ENCODE measurements at regions of chr19 and their contacts with region 1.

Region 1: GRCh38 chr19:15154002-15154612 is 46.7 kb downstream of the NOTCH3 start:
- DNase-seq: no peak
- ATAC-seq: peak; percentile 73
- H3K4me3 ChIP-seq: no peak overlapping the region
- H3K27ac ChIP-seq: no peak overlapping the region
- H3K4me1 ChIP-seq: no peaks in the 10 kb centered on the region
- H3K27me3 ChIP-seq: no peaks in the 10 kb centered on the region
- CTCF ChIP-seq: peak; percentile 75

Region 2: GRCh38 chr19:14786421-14786851 is 367.7 kb before region 1 on chr19:
- CTCF ChIA-PET with region 1: no interaction called
- POLR2A ChIA-PET with region 1: no interaction called
- in situ Hi-C with region 1: no loop called
- intact Hi-C with region 1: no loop called
- DNase-seq: no peak
- ATAC-seq: peak; percentile 79
- H3K4me3 ChIP-seq: 0 out of 4 replicates have a peak overlapping the region, but pooled peaks have one; percentile 4 to 6
- H3K27ac ChIP-seq: no peak overlapping the region
- H3K4me1 ChIP-seq: no peaks in the 10 kb centered on the region
- H3K27me3 ChIP-seq: no peaks in the 10 kb centered on the region
- CTCF ChIP-seq: peak; percentile 94

Region 3: DNA sequence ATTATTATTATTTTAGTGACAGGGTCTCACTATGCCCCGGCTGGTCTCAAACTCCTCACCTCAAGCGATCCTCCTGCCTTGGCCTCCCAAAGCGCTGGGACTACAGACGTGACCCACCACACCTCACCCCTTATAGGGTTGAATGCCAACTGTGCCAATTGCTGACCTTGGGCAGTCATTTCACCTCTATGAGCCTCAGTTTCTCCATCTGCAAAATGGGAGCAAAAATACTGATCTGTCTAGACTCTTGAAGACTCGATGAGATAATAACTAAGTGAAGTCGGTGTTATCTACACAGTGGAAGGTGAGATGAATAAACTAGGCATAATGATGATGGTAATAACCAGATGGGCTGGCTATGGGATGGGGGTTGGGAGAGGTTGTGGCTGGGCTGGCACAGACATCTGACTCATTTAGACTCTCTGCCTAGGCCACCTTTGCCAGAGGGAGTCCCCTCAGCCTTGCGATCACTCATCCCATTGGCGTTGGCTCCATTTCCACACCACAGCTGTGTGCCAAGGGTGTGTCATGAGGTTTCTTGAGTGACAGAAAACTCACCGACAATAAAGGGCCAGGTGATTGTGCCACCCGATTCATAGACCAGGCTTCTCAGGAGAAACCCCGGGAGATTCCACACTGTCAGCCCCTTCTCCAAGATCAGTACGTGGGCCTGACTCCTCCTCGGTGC is 105.1 kb before region 1 on chr19 and contains the start of gene CASP14:
- CTCF ChIA-PET with region 1: no interaction called
- POLR2A ChIA-PET with region 1: no interaction called
- in situ Hi-C with region 1: no loop called
- intact Hi-C with region 1: no loop called
- DNase-seq: no peak
- ATAC-seq: no peak
- H3K4me3 ChIP-seq: no peak within 1 kb of the TSS
- H3K27ac ChIP-seq: no peak within 1 kb of the TSS
- H3K4me1 ChIP-seq: no peaks in the 10 kb centered on the region
- H3K27me3 ChIP-seq: no peaks in the 10 kb centered on the region
- CTCF ChIP-seq: no peak
- total RNA-seq, gene CASP14: not detected

Region 4: GRCh38 chr19:15101479-15102082 is 52.5 kb before region 1 on chr19:
- CTCF ChIA-PET with region 1: interaction called, 3 read pairs
- POLR2A ChIA-PET with region 1: interaction called, 21 read pairs
- in situ Hi-C with region 1: no loop called
- intact Hi-C with region 1: no loop called
- DNase-seq: peak; percentile 30
- ATAC-seq: peak; percentile 69
- H3K4me3 ChIP-seq: no peak overlapping the region
- H3K27ac ChIP-seq: no peak overlapping the region
- H3K4me1 ChIP-seq: peaks cover 4% of the 10 kb centered on the region; the same call in 1 of the 2 replicates
- H3K27me3 ChIP-seq: no peaks in the 10 kb centered on the region
- CTCF ChIP-seq: peak; percentile 78

Region 5: DNA sequence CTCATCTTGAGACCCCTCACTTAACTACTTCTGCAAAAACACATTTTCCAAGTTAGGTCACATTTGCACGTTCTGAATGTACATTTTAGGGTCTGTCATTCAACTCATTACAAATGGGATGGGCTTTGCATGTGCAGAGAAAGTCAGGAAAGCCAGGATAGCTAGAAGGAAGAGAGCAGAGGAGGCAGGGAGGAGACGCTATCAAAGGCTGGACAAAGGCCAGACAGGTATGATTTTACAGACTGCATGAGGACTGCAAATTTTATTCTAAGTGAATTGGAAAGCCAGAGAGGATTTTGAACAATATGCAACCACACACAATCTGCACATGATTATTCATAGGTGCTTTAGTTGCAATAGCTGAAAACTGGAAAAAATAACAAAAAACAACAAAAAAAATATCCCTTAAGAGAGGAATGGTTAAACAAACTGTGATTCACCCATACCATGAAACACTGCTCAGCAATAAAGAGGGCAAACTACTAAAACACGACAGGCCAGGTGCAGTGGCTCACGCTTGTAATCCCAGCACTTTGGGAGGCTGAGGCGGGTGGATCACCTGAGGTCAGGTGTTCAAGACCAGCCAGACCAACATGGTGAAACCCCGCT is 25.8 kb before region 1 on chr19:
- CTCF ChIA-PET with region 1: no interaction called
- POLR2A ChIA-PET with region 1: interaction called, 10 read pairs
- in situ Hi-C with region 1: no loop called
- intact Hi-C with region 1: no loop called
- DNase-seq: no peak
- ATAC-seq: no peak
- H3K4me3 ChIP-seq: no peak overlapping the region
- H3K27ac ChIP-seq: no peak overlapping the region
- H3K4me1 ChIP-seq: peaks cover 11% of the 10 kb centered on the region
- H3K27me3 ChIP-seq: no peaks in the 10 kb centered on the region
- CTCF ChIP-seq: no peak

Region 6: GRCh38 chr19:15136246-15136954 is 17.7 kb before region 1 on chr19:
- CTCF ChIA-PET with region 1: interaction called, 11 read pairs
- POLR2A ChIA-PET with region 1: no interaction called
- in situ Hi-C with region 1: no loop called
- intact Hi-C with region 1: no loop called
- DNase-seq: no peak
- ATAC-seq: no peak
- H3K4me3 ChIP-seq: no peak overlapping the region
- H3K27ac ChIP-seq: no peak overlapping the region
- H3K4me1 ChIP-seq: no peaks in the 10 kb centered on the region
- H3K27me3 ChIP-seq: no peaks in the 10 kb centered on the region
- CTCF ChIP-seq: no peak

Region 7: GRCh38 chr19:15304140-15304705 is 150.1 kb after region 1 on chr19:
- CTCF ChIA-PET with region 1: no interaction called
- POLR2A ChIA-PET with region 1: no interaction called
- in situ Hi-C with region 1: no loop called
- intact Hi-C with region 1: no loop called
- DNase-seq: no peak
- ATAC-seq: peak; percentile 62
- H3K4me3 ChIP-seq: no peak overlapping the region
- H3K27ac ChIP-seq: peak overlapping the region; percentile 7; the same call in 1 of the 2 replicates
- H3K4me1 ChIP-seq: peaks cover 42% of the 10 kb centered on the region
- H3K27me3 ChIP-seq: no peaks in the 10 kb centered on the region
- CTCF ChIP-seq: no peak